ENCODE measurements at regions of chr5 and their contacts with region 1.

Region 1: GRCh38 chr5:95554647-95555548 is at the starts of genes ARSK and SKIC3:
- DNase-seq: peak; percentile 96
- H3K4me3 ChIP-seq: peak within 1 kb of the TSS; percentile 76 to 84
- H3K27ac ChIP-seq: peak within 1 kb of the TSS; percentile 92 to 94
- H3K4me1 ChIP-seq: no peaks in the 10 kb centered on the region
- H3K27me3 ChIP-seq: no peaks in the 10 kb centered on the region
- CTCF ChIP-seq: peak in 2 of 4 experiments; percentile 50 to 52
- POLR2A ChIP-seq: peak; percentile 83
- total RNA-seq, gene ARSK: 7.3 to 23.3 TPM
- total RNA-seq, gene SKIC3: 44.9 to 73.9 TPM

Region 2: DNA sequence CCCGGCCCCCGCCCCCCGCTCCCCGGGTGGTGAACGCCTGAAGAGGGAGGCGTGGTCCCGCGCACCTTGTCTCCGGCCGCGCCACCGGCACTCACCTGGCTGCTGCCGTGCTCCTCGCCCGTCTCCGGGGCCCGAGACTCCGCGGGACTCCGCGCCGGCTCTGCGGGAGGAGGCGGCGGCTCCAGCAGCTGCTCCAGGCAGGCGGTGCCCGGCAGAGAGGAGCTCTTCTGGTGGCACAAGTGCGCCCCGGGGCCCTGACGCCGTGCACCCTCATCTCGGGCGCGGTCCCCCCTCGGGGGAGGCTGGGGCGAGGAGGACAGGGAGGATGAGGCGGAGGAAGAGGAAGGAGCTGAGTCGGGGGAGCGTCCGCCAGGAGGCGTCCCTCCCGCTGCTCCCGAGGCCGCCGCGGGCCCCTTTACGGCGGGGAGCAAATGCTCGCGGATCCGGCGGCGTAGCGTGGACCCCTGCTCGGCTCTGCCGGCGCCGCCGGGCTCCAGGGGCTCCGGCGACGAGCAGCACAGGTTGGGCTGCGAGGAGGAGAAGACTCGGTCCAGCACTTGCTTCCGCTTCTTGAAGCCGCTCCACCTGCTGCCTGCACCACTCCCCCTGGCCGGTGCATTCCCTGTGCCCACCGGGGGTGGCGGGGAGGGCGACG is 271.0 kb before region 1 on chr5:
- intact Hi-C with region 1: no loop called
- DNase-seq: no peak
- H3K4me3 ChIP-seq: peak overlapping the region; percentile 45 to 50
- H3K27ac ChIP-seq: peak overlapping the region; percentile 10 to 31
- H3K4me1 ChIP-seq: peaks cover 3% of the 10 kb centered on the region
- H3K27me3 ChIP-seq: no peaks in the 10 kb centered on the region
- CTCF ChIP-seq: peak in 3 of 4 experiments; percentile 22 to 46 (median 34)
- POLR2A ChIP-seq: no peak

Region 3: GRCh38 chr5:95471942-95472341 is 83.0 kb before region 1 on chr5:
- intact Hi-C with region 1: no loop called
- DNase-seq: no peak
- H3K4me3 ChIP-seq: no peak overlapping the region
- H3K27ac ChIP-seq: no peak overlapping the region
- H3K4me1 ChIP-seq: no peaks in the 10 kb centered on the region
- H3K27me3 ChIP-seq: no peaks in the 10 kb centered on the region
- CTCF ChIP-seq: no peak
- POLR2A ChIP-seq: no peak

Region 4: DNA sequence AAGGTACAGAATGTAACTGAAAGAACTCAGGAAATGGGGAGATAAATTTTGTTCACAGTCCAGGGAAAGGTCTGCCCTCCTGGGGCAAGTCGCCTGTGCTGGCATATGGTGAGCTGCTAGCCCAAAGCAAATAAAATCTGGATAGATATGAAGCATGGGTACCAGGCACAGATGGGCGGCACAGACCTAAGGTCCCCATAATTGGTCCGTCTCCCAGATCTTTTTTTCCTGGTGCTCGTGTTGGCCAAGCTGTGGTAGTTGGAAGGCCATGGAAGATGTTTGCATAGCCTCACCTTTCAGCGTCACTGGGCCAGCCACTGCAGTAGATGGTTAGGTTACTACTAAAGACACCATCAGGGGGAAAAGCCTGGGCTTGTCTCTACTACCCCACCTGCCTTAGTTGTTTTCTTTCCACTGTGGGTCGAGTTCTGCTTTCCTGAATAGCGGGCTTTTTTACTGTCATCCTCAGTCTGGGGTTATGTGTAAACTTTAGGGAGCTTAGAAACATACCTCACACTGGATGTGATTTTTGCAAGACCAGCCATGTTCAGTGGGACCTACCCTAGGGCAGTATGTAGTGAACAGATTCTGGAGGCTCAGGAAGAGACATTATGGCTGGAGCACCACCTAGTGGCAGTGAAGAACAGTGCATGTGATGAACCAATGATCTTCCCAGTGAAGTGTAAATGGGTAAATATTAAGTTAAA is 291.8 kb after region 1 on chr5:
- intact Hi-C with region 1: loop called (anchors 10 kb)
- DNase-seq: peak; percentile 66
- H3K4me3 ChIP-seq: no peak overlapping the region
- H3K27ac ChIP-seq: peak overlapping the region; percentile 22 to 33
- H3K4me1 ChIP-seq: peaks cover 5% of the 10 kb centered on the region
- H3K27me3 ChIP-seq: no peaks in the 10 kb centered on the region
- CTCF ChIP-seq: peak; percentile 83 to 98 (median 94)
- POLR2A ChIP-seq: no peak